Tibial artery (tissue), 4 donors: ENCODE measurements at regions of chr9 and their contacts with region 1.

Region 1: DNA sequence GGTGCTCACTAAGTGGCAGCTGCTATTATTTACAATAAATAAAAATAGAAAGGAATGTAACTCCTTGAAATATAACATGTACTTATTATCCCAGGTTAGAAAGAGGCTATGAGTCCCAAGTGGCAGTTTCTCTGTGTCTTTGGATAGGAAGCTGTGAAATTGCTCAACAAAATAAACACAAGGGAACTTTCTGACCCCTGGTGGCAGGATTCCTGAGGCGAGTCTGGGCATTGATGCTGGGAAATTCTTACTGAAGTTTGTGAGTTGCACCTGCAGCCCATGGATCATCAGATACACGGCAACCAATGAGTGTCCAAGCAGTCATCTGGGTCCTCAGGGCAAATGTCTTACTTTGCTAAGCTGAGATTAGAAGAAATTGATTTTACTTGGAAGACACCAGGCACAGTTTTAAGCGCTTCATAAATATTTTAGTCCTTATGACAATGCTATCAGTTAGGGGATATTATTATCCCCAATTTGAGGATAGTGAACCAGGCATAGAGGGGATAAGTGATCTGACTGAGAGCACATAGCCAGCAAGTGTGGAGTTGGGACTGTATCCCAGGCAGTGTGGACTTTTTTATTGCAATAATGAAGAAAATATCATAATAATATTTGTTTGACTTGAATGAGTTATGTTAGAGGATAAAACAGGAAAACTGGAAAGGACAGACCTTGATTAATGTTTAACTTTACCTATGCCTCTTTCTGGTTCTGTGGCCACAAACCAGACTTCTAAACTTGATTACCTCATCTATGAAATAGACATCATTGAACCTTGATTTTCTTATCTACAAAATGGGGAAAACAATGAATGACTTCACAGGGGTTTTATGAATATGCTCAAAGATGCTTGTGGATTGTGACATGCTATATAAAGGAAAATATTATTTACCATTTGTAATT is 265.5 kb upstream of the ADAMTSL1 start:
- DNase-seq: no peak
- H3K4me3 ChIP-seq: no peak overlapping the region
- H3K27ac ChIP-seq: no peak overlapping the region
- H3K4me1 ChIP-seq: peaks cover 0 to 8% (median 0%) of the 10 kb centered on the region in 4 donors
- H3K27me3 ChIP-seq: no peaks in the 10 kb centered on the region
- CTCF ChIP-seq: peak; percentile 47 to 55

Region 2: GRCh38 chr9:17810728-17811571 is 397.5 kb before region 1 on chr9:
- intact Hi-C with region 1: loop called (anchors 5 kb)
- DNase-seq: no peak
- H3K4me3 ChIP-seq: no peak overlapping the region
- H3K27ac ChIP-seq: no peak overlapping the region
- H3K4me1 ChIP-seq: peaks cover 0 to 4% (median 0%) of the 10 kb centered on the region in 4 donors
- H3K27me3 ChIP-seq: peaks cover 0 to 5% of the 10 kb centered on the region in 2 donors
- CTCF ChIP-seq: peak; percentile 76 to 80